Activated CD8-positive, alpha-beta T cell treated with anti-CD3 and anti-CD28 coated beads, Interleukin-2, amount 10 ng/mL, durations not matched to agents 7 days and 5 days (primary cell): ENCODE measurements at regions of chr19 and their contacts with region 1.

Region 1: GRCh38 chr19:14432791-14433553 is at the start of gene PKN1:
- DNase-seq: peak; percentile 60
- ATAC-seq: peak; percentile 54
- H3K4me3 Mint-ChIP-seq: peak within 1 kb of the TSS; percentile 79
- H3K27ac Mint-ChIP-seq: peak within 1 kb of the TSS; percentile 80
- H3K4me1 Mint-ChIP-seq: peaks cover 41% of the 10 kb centered on the region
- H3K27me3 Mint-ChIP-seq: peaks cover 4% of the 10 kb centered on the region
- total RNA-seq, gene PKN1: 244 to 263 TPM

Region 2: DNA sequence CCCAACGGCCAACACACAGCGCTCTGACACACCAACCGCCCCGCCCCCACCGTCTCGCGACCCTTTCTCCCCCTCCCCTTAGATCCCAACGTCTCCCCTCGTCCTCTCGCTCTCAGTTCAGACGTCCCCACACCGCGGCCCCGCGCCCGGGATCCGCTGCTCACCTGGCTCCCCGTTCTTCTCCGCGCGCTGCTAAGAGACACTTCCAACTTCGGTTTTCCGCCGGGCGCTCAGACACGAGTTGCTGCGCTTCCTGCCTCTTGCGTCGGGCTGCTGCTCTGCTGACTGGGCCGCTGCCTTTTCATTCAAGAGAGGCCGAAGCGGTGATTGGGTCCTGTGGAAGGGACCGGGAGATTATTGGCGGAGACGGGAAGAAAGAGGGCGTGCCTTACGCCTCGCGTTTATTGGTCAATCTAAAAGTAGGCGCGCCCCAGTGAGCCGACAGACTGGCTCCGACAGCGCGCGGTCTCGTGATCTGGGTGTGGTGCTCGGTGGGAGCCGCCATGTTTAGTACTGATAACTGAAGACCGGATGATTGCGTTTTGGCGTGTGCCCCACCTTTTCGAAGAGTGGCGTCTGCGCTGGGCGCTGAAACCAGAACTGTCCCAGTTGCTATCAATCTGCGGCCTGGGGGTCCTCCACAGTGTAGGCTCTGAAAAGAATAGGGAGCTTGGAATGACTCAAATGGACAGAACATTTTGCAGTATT is 13.7 kb before region 1 on chr19 and contains the start of gene DDX39A:
- CTCF ChIA-PET with region 1: interaction called, 27 read pairs
- POLR2A ChIA-PET with region 1: interaction called, 9 read pairs
- DNase-seq: peak; percentile 99
- ATAC-seq: peak; percentile 91
- H3K4me3 Mint-ChIP-seq: peak within 1 kb of the TSS; percentile 94
- H3K27ac Mint-ChIP-seq: peak within 1 kb of the TSS; percentile 99
- H3K4me1 Mint-ChIP-seq: peaks cover 41% of the 10 kb centered on the region
- H3K27me3 Mint-ChIP-seq: no peaks in the 10 kb centered on the region
- total RNA-seq, gene DDX39A: 309 to 313 TPM

Region 3: GRCh38 chr19:14472202-14472938 is 39.4 kb after region 1 on chr19:
- CTCF ChIA-PET with region 1: interaction called, 26 read pairs
- POLR2A ChIA-PET with region 1: interaction called, 3 read pairs
- DNase-seq: peak; percentile 88
- ATAC-seq: peak; percentile 73
- H3K4me3 Mint-ChIP-seq: no peak overlapping the region
- H3K27ac Mint-ChIP-seq: no peak overlapping the region
- H3K4me1 Mint-ChIP-seq: peaks cover 43% of the 10 kb centered on the region
- H3K27me3 Mint-ChIP-seq: peaks cover 16% of the 10 kb centered on the region